MCF 10A (cell line): ENCODE measurements at regions of chr3 and their contacts with region 1.

Region 1: DNA sequence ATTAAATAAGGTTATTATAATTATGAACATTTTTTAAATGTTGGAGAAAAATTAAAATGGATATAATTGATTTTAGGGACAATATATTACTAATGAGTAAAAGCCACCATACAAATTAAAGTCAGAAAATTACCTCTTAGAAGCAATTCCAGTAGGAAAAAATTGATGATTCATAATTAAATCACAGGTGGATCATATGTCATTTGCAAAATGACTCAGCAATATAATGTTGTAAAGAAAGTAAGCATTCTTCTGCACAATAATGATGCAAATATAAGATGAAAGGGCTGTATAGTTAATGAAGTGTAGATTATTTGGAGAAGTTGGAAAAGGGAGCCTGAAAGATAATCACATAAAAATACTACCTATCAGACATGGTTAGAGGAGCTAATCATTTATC is 25.8 kb downstream of the ZPLD1 start:
- DNase-seq: peak; percentile 28
- H3K4me3 Mint-ChIP-seq: no peak overlapping the region
- H3K27ac Mint-ChIP-seq: no peak overlapping the region
- H3K4me1 Mint-ChIP-seq: peaks cover 13% of the 10 kb centered on the region
- H3K27me3 Mint-ChIP-seq: no peaks in the 10 kb centered on the region
- CTCF ChIP-seq: no peak

Region 2: GRCh38 chr3:102235679-102236078 is 224.9 kb before region 1 on chr3:
- CTCF ChIA-PET with region 1: interaction called, 3 read pairs
- POLR2A ChIA-PET with region 1: no interaction called
- intact Hi-C with region 1: loop called (anchors 5 kb)
- DNase-seq: peak; percentile 41
- H3K4me3 Mint-ChIP-seq: no peak overlapping the region
- H3K27ac Mint-ChIP-seq: no peak overlapping the region
- H3K4me1 Mint-ChIP-seq: no peaks in the 10 kb centered on the region
- H3K27me3 Mint-ChIP-seq: no peaks in the 10 kb centered on the region
- CTCF ChIP-seq: peak; percentile 66

Region 3: DNA sequence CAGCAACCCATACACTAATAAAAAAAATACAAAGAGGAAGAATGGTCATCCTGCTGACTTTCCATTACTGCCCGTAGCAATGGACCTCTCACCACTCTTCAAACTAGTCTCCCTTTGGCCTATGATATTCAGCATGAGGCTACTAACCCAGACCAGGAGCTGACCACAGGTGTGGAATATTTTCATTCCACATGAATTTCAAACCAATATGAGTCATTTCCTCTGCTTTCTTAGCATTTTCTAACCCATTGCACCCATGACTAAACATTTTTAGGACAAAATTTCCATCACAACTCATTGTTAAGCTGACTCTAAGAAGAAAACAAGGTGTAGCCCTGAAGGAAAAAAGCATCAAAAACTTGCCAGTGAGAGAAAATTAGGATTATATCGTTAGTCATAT is 59.8 kb before region 1 on chr3:
- CTCF ChIA-PET with region 1: no interaction called
- POLR2A ChIA-PET with region 1: no interaction called
- intact Hi-C with region 1: loop called (anchors 2 kb)
- DNase-seq: peak; percentile 57
- H3K4me3 Mint-ChIP-seq: no peak overlapping the region
- H3K27ac Mint-ChIP-seq: peak overlapping the region; percentile 86
- H3K4me1 Mint-ChIP-seq: peaks cover 19% of the 10 kb centered on the region
- H3K27me3 Mint-ChIP-seq: no peaks in the 10 kb centered on the region
- CTCF ChIP-seq: no peak

Region 4: GRCh38 chr3:102474207-102474606 is 13.6 kb after region 1 on chr3:
- CTCF ChIA-PET with region 1: no interaction called
- POLR2A ChIA-PET with region 1: no interaction called
- intact Hi-C with region 1: no loop called
- DNase-seq: no peak
- H3K4me3 Mint-ChIP-seq: no peak overlapping the region
- H3K27ac Mint-ChIP-seq: no peak overlapping the region
- H3K4me1 Mint-ChIP-seq: no peaks in the 10 kb centered on the region
- H3K27me3 Mint-ChIP-seq: no peaks in the 10 kb centered on the region
- CTCF ChIP-seq: no peak